Posterior cingulate gyrus (tissue), 11 donors: ENCODE measurements at regions of chr17 and their contacts with region 1.

Region 1: GRCh38 chr17:81253358-81254131 is 14.4 kb downstream of the NDUFAF8 start:
- DNase-seq: peak in 7 of 10 donors; percentile 53 to 91 (median 65)

Region 2: GRCh38 chr17:81379523-81379942 is 126.0 kb after region 1 on chr17:
- intact Hi-C with region 1: no loop called
- DNase-seq: no peak

Region 3: DNA sequence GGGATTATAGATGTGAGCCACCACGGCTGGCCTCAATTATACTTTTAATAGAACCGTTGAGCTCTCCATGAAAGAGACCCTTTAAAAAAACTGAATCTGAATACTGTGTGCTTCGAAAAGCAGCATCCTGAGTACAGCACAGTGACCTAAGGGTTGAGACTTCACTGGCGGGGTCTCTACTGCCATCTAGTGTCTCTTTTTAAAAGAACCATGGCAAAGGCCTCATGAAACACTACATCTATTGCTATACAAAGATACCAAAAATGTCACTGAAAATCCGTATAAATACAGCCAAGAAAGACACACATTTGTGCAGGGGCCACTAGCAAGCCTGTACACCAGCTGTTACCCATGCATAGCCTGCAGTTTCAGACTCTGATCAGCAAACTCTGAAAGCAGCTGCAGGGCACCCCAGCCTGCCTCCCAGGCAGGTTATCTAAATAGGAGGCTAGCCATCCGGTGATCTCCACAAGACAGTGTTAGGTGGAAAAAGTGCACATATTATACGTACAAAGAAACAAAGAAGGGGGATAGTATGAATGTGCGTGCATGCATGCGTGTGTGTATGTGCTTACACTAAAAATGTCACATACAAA is 348.1 kb after region 1 on chr17:
- intact Hi-C with region 1: loop called (anchors 1 kb)
- DNase-seq: peak in 2 of 10 donors; percentile 55 to 82